Natural killer cell (primary cell): ENCODE measurements at regions of chr17 and their contacts with region 1.

Region 1: DNA sequence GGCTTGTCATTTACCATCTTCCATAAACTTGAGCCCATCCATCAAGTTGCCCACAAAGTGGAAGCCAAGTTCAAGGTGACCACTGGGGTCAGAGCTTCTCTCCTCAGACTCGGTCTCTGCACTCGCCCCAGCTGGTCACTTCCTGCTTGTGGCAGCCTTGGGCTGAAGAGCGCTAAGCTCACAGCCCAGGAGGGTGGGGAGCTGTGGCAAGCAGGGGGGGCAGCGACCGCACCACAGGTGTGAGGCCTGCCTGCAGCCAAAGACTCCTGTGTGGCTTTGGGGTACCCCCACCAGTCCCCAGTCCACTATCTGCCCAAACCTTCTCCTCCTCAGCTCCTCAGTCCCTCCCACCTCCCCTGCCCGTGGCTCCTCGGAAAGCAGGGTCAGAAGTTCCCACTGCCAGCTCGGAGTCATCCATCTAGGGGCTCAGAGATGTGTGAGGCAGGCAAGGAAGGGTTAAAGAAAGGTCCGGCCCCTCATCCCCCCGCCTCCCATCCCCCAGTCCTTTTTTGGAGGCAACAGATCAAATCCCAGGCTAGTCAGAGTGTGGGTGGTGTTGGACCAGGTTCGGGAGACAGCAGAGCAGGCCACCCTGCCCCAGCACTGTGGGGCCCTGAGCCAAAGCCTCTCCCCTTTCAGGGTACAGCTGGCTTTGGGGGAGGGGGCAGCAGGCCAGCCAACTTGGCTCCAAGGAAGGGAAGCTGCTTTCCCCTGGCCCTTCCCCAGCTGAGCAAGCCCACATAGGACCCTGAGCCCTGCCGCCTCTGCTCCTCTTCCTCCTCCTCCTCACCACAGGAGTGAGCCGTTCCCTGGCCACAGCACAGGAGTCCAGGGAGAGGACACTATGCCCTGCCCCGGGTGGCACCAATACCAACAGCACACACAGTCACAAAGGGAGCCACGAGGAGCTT is 3.2 kb downstream of the CSF3 start:
- DNase-seq: no peak
- ATAC-seq: no peak
- H3K4me3 ChIP-seq: no peak overlapping the region
- H3K4me3 Mint-ChIP-seq: no peak overlapping the region
- H3K27ac ChIP-seq: no peak overlapping the region
- H3K27ac Mint-ChIP-seq: peak overlapping the region; percentile 41 to 47
- H3K4me1 ChIP-seq: peaks cover 19% of the 10 kb centered on the region
- H3K4me1 Mint-ChIP-seq: peaks cover 0 to 18% of the 10 kb centered on the region in 2 donors
- H3K27me3 ChIP-seq: no peaks in the 10 kb centered on the region
- H3K27me3 Mint-ChIP-seq: no peaks in the 10 kb centered on the region
- CTCF ChIP-seq: no peak

Region 2: GRCh38 chr17:39980351-39981206 is 37.9 kb before region 1 on chr17 and contains the start of gene PSMD3:
- intact Hi-C with region 1: no loop called
- DNase-seq: peak; percentile 97 to 100
- ATAC-seq: peak; percentile 89 to 97 (median 91)
- H3K4me3 ChIP-seq: peak within 1 kb of the TSS; percentile 70
- H3K4me3 Mint-ChIP-seq: peak within 1 kb of the TSS; percentile 98
- H3K27ac ChIP-seq: peak within 1 kb of the TSS; percentile 91
- H3K27ac Mint-ChIP-seq: peak within 1 kb of the TSS; percentile 99
- H3K4me1 ChIP-seq: peaks cover 18% of the 10 kb centered on the region
- H3K4me1 Mint-ChIP-seq: peaks cover 27 to 29% of the 10 kb centered on the region in 2 donors
- H3K27me3 ChIP-seq: no peaks in the 10 kb centered on the region
- H3K27me3 Mint-ChIP-seq: no peaks in the 10 kb centered on the region
- CTCF ChIP-seq: peak; percentile 71
- total RNA-seq, gene PSMD3: 66.1 to 83.8 (median 78.9) TPM

Region 3: DNA sequence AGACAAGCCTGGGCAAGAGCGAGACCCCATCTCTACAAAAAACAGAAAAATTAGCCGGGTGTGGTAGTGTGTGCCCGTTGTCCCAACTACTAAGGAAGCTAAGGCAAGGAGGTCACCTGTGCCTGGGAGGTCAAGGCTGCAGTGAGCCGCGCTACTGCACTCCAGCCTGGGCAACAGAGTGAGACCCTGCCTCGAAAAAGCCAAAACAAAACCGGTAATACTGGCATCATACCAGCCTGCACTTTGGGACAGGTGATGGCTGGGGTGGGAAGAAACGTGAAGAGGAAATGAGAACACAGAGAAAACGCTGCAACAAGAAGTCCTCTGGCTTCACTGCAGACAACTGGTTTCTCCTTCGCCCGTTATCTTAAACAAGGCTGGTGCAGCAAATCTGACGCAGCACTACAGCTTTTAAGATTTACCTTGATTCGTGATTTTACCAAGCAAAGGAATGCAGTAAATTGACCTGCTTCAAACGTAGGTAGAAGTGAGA is 121.1 kb after region 1 on chr17:
- intact Hi-C with region 1: no loop called
- DNase-seq: no peak
- ATAC-seq: peak in 2 of 3 donors; percentile 2 to 6
- H3K4me3 ChIP-seq: peak overlapping the region; percentile 51
- H3K4me3 Mint-ChIP-seq: peak overlapping the region; percentile 95
- H3K27ac ChIP-seq: peak overlapping the region; percentile 94
- H3K27ac Mint-ChIP-seq: peak overlapping the region; percentile 97
- H3K4me1 ChIP-seq: peaks cover 16% of the 10 kb centered on the region
- H3K4me1 Mint-ChIP-seq: peaks cover 28 to 34% of the 10 kb centered on the region in 2 donors
- H3K27me3 ChIP-seq: no peaks in the 10 kb centered on the region
- H3K27me3 Mint-ChIP-seq: no peaks in the 10 kb centered on the region
- CTCF ChIP-seq: no peak

Region 4: GRCh38 chr17:40191237-40192208 is 173.1 kb after region 1 on chr17:
- intact Hi-C with region 1: loop called (anchors 1 kb)
- DNase-seq: peak; percentile 59 to 81
- ATAC-seq: peak; percentile 79 to 89 (median 87)
- H3K4me3 ChIP-seq: peak overlapping the region; percentile 49
- H3K4me3 Mint-ChIP-seq: peak overlapping the region; percentile 96
- H3K27ac ChIP-seq: no peak overlapping the region
- H3K27ac Mint-ChIP-seq: peak overlapping the region in 1 of 2 donors; percentile 61
- H3K4me1 ChIP-seq: peaks cover 15% of the 10 kb centered on the region
- H3K4me1 Mint-ChIP-seq: peaks cover 0 to 5% of the 10 kb centered on the region in 2 donors
- H3K27me3 ChIP-seq: no peaks in the 10 kb centered on the region
- H3K27me3 Mint-ChIP-seq: peaks cover 0 to 4% of the 10 kb centered on the region in 2 donors
- CTCF ChIP-seq: peak; percentile 66

Region 5: DNA sequence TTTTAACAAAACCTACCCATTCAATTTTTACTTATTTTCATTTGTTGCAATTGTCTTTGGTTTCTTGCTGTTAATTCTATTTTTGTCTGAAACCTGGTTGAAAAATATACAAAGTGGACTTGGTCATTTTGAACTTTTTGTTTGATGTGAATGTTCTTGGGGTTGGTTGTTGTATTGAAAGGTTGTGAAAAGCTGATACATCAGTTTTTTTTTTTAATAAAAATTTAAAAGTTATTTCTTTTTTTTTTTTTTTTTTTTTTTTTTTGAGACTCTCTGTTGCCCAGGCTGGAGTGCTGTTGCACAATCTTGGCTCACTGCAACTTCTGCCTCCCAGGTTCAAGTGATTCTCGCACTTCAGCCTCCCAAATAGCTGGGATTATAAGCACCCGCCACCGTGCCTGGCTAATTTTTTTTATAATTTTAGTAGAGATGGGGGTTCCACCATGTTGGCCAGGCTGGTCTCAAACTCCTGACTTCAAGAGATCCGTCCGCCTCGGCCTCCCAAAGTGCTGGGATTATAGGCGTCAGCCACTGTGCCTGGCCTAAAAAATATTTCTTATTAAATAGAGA is 229.5 kb after region 1 on chr17:
- intact Hi-C with region 1: no loop called
- DNase-seq: no peak
- ATAC-seq: no peak
- H3K4me3 ChIP-seq: no peak overlapping the region
- H3K4me3 Mint-ChIP-seq: no peak overlapping the region
- H3K27ac ChIP-seq: no peak overlapping the region
- H3K27ac Mint-ChIP-seq: no peak overlapping the region
- H3K4me1 ChIP-seq: peaks cover 3% of the 10 kb centered on the region
- H3K4me1 Mint-ChIP-seq: peaks cover 29 to 32% of the 10 kb centered on the region in 2 donors
- H3K27me3 ChIP-seq: no peaks in the 10 kb centered on the region
- H3K27me3 Mint-ChIP-seq: no peaks in the 10 kb centered on the region
- CTCF ChIP-seq: no peak